CD4-positive, alpha-beta memory T cell (primary cell): ENCODE measurements at regions of chr9 and their contacts with region 1.

Region 1: DNA sequence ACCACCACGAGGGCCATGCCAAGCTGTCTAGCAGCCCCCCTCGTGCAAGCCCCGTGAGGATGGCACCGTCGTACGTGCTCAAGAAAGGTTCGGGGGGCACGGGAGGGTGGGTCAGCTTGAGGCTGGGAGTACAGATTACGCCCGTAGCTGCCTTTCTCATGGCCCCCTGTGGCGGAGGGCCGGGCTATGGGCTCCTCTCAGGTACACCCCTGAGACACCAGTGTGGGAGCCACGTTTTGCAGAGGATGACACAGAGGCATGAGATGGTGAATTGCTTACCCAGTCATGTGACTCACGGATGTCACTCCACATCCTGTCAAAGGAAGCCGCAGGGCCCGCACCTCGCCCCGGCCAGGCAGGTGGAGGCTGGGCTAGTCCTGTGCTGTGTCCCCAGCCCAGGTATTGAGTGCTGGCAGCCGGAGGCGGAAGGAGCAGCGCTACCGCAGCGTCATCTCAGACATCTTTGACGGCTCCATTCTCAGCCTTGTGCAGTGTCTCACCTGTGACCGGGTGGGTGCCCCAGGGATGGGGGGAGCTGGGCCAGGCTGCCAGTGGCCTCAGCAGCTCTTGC is 33.7 kb downstream of the USP20 start:
- DNase-seq: peak; percentile 94 to 98 (median 96)
- H3K4me3 ChIP-seq: peak overlapping the region; percentile 12 to 51
- H3K4me3 Mint-ChIP-seq: peak overlapping the region; percentile 59 to 78 (median 69)
- H3K27ac ChIP-seq: peak overlapping the region; percentile 90
- H3K27ac Mint-ChIP-seq: peak overlapping the region; percentile 86 to 98 (median 94)
- H3K4me1 ChIP-seq: peaks cover 89% of the 10 kb centered on the region
- H3K4me1 Mint-ChIP-seq: peaks cover 46 to 93% (median 73%) of the 10 kb centered on the region in 4 donors
- H3K27me3 ChIP-seq: no peaks in the 10 kb centered on the region
- H3K27me3 Mint-ChIP-seq: no peaks in the 10 kb centered on the region

Region 2: GRCh38 chr9:129656795-129657390 is 212.1 kb before region 1 on chr9:
- CTCF ChIA-PET with region 1: no interaction called
- POLR2A ChIA-PET with region 1: no interaction called
- intact Hi-C with region 1: no loop called
- DNase-seq: no peak
- H3K4me3 ChIP-seq: no peak overlapping the region
- H3K4me3 Mint-ChIP-seq: no peak overlapping the region
- H3K27ac ChIP-seq: no peak overlapping the region
- H3K27ac Mint-ChIP-seq: no peak overlapping the region
- H3K4me1 ChIP-seq: no peaks in the 10 kb centered on the region
- H3K4me1 Mint-ChIP-seq: no peaks in the 10 kb centered on the region
- H3K27me3 ChIP-seq: no peaks in the 10 kb centered on the region
- H3K27me3 Mint-ChIP-seq: peaks cover 3 to 6% of the 10 kb centered on the region in 2 donors

Region 3: GRCh38 chr9:129720181-129720864 is 148.7 kb before region 1 on chr9:
- CTCF ChIA-PET with region 1: no interaction called
- POLR2A ChIA-PET with region 1: no interaction called
- intact Hi-C with region 1: no loop called
- DNase-seq: no peak
- H3K4me3 ChIP-seq: no peak overlapping the region
- H3K4me3 Mint-ChIP-seq: no peak overlapping the region
- H3K27ac ChIP-seq: no peak overlapping the region
- H3K27ac Mint-ChIP-seq: peak overlapping the region in 1 of 7 donors; percentile 16
- H3K4me1 ChIP-seq: no peaks in the 10 kb centered on the region
- H3K4me1 Mint-ChIP-seq: no peaks in the 10 kb centered on the region
- H3K27me3 ChIP-seq: no peaks in the 10 kb centered on the region
- H3K27me3 Mint-ChIP-seq: peaks cover 2 to 8% of the 10 kb centered on the region in 2 donors

Region 4: DNA sequence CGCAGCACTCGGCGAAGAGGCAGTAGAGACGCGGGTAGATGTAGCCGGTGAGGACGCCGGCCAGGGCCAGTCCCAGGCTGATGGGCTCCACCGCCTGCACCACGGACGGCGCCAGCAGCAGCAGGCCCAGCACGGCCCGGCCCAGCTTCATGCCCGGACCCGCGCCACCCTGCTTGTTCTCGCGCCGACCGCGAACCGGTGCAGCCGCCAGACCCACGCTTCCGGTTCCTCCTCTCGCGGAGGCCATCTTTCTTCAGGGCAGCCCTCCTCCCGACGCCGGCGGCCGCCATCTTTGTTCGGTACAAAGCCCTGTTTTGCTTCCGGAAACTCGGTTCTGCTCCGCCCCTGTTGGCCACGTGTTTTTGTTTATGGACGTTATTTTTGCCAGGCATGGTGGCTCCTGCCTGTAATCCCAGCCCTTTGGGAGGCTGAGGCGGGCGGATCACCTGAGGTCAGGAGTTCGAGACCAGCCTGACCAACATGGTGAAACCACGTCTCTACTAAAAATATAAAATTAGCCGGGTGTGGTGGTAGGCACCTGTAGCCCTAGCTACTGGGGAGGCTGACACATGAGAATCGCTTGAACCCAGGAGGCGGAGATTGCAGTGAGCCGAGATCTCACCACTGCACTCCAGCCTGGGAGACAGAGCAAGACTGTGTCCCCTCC is 44.9 kb before region 1 on chr9 and contains the start of gene TOR1A:
- CTCF ChIA-PET with region 1: no interaction called
- POLR2A ChIA-PET with region 1: interaction called, 4 read pairs
- intact Hi-C with region 1: loop called (anchors 1 kb)
- DNase-seq: peak; percentile 89 to 95 (median 90)
- H3K4me3 ChIP-seq: peak within 1 kb of the TSS; percentile 24 to 73
- H3K4me3 Mint-ChIP-seq: peak within 1 kb of the TSS; percentile 84 to 91 (median 88)
- H3K27ac ChIP-seq: peak within 1 kb of the TSS; percentile 62
- H3K27ac Mint-ChIP-seq: peak within 1 kb of the TSS; percentile 73 to 95 (median 88)
- H3K4me1 ChIP-seq: peaks cover 8% of the 10 kb centered on the region
- H3K4me1 Mint-ChIP-seq: peaks cover 8 to 18% (median 13%) of the 10 kb centered on the region in 4 donors
- H3K27me3 ChIP-seq: no peaks in the 10 kb centered on the region
- H3K27me3 Mint-ChIP-seq: no peaks in the 10 kb centered on the region
- total RNA-seq, gene TOR1A: 39.8 to 41.9 TPM

Region 5: GRCh38 chr9:130053504-130054324 is 184.7 kb after region 1 on chr9 and contains the start of gene GPR107:
- CTCF ChIA-PET with region 1: interaction called, 3 read pairs
- POLR2A ChIA-PET with region 1: interaction called, 12 read pairs
- intact Hi-C with region 1: no loop called
- DNase-seq: peak; percentile 71 to 80 (median 79)
- H3K4me3 ChIP-seq: peak within 1 kb of the TSS; percentile 67 to 98
- H3K4me3 Mint-ChIP-seq: peak within 1 kb of the TSS; percentile 90 to 95 (median 95)
- H3K27ac ChIP-seq: peak within 1 kb of the TSS; percentile 95
- H3K27ac Mint-ChIP-seq: peak within 1 kb of the TSS; percentile 91 to 97 (median 95)
- H3K4me1 ChIP-seq: peaks cover 29% of the 10 kb centered on the region
- H3K4me1 Mint-ChIP-seq: peaks cover 18 to 38% (median 28%) of the 10 kb centered on the region in 4 donors
- H3K27me3 ChIP-seq: no peaks in the 10 kb centered on the region
- H3K27me3 Mint-ChIP-seq: no peaks in the 10 kb centered on the region
- total RNA-seq, gene GPR107: 23.8 to 24.4 TPM